ENCODE measurements at regions of chr17 and their contacts with region 1.

Region 1: DNA sequence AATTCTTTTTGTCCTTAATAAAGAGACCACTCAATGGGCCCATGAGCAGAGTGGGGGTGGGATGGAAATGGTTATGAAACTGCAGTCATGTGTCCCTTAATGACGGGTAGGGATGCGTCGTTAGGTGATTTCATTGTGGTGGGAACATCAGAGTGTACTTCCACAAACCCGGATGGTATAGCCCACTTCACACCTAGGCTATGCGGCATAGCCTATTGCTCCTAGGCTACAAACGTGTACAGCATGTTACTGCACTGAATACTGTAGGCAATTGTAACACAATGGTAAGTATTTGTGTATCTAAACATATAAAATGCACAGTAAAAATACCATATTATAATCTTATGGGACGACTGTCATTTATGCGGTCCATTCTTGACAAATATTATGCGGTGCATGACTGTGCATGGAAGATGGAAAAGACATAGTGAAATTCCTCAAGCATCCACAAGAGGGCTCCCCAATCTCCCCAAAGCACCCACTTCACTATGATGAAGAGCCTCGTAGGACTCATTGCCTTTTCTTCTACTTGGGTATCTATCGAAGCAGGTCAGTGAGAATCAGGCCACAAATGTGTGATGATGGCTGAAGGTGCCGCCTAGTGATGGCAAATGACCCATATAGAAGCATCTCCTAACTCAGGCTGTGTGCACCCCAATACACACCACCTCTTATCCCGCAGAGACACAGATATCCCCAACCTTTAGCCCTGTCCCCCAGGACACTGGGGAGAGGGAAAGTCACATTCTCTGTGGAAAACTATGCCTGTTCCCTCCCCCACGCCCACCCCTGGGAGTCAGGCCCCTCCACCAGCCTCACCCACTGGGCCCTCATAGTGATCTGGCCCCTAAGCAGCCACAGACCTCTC is 43.5 kb downstream of the TBX21 start:
- DNase-seq: no peak
- H3K4me3 Mint-ChIP-seq: no peak overlapping the region
- H3K27ac Mint-ChIP-seq: no peak overlapping the region
- H3K4me1 Mint-ChIP-seq: peaks cover 2% of the 10 kb centered on the region
- H3K27me3 Mint-ChIP-seq: peaks cover 39% of the 10 kb centered on the region

Region 2: GRCh38 chr17:47802341-47803022 is 25.9 kb after region 1 on chr17:
- intact Hi-C with region 1: loop called (anchors 1 kb)
- DNase-seq: peak; percentile 28
- H3K4me3 Mint-ChIP-seq: no peak overlapping the region
- H3K27ac Mint-ChIP-seq: no peak overlapping the region
- H3K4me1 Mint-ChIP-seq: no peaks in the 10 kb centered on the region
- H3K27me3 Mint-ChIP-seq: peaks cover 3% of the 10 kb centered on the region

Region 3: GRCh38 chr17:47935961-47936360 is 159.4 kb after region 1 on chr17:
- intact Hi-C with region 1: no loop called
- DNase-seq: no peak
- H3K4me3 Mint-ChIP-seq: no peak overlapping the region
- H3K27ac Mint-ChIP-seq: no peak overlapping the region
- H3K4me1 Mint-ChIP-seq: peaks cover 8% of the 10 kb centered on the region
- H3K27me3 Mint-ChIP-seq: no peaks in the 10 kb centered on the region

Measured in activated T-helper 2 cell treated with anti-CD3 and anti-CD28 coated beads, Interferon-gamma antibody, Interleukin-2, Interleukin-4, amounts not matched to agents 10 μg/mL and 5 μg/mL and 100 μg/mL, durations not matched to agents 14 hours and 24 hours and 36 hours (primary cell).